Endothelial cell of umbilical vein (primary cell): ENCODE measurements at regions of chr7 and their contacts with region 1.

Region 1: DNA sequence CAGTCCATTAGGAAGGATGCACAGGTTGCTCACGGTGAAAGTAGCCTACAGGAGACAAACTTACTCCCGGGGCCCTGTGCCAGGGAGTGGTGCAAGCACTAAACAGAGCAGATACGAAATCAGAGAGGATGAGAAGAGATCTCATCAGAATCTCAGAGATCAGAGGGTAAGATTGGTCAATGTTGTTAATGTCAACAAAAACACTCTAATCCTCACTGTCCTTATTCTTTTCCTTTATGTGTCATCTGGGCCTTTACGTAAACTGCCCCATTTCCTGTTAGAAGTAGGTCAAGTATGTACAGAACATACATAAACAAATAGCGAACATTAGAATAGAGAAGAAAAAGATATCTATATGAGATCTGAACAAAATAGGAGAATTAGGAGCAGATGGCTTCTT is 163.1 kb downstream of the PPP1R17 start:
- DNase-seq: no peak
- H3K4me3 ChIP-seq: no peak overlapping the region
- H3K27ac ChIP-seq: no peak overlapping the region
- H3K4me1 ChIP-seq: peaks cover 8% of the 10 kb centered on the region
- H3K27me3 ChIP-seq: no peaks in the 10 kb centered on the region
- CTCF ChIP-seq: no peak
- POLR2A ChIP-seq: no peak

Region 2: DNA sequence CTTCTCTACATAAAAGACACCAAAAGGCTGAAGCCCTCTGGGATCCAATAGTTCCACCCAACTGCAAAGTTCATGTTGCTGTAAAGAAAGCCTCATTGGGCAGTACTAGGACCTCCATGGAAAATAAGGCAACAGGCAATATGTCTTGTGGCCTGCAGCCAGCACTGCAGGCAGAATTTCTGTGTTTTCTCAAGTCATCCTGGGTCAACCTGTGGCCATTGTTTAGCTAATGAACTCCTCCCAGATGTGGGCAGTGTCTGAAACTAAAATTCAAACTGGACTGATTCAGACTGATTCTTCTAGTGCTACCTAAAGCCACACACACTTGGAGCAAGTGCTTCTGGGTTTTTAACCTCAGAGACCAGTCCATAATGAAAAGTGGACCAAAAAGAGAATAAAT is 21.5 kb before region 1 on chr7:
- CTCF ChIA-PET with region 1: interaction called, 3 read pairs
- POLR2A ChIA-PET with region 1: no interaction called
- dilution Hi-C with region 1: no loop called
- intact Hi-C with region 1: loop called (anchors 1 kb)
- DNase-seq: peak; percentile 50
- H3K4me3 ChIP-seq: no peak overlapping the region
- H3K27ac ChIP-seq: no peak overlapping the region
- H3K4me1 ChIP-seq: peaks cover 20% of the 10 kb centered on the region
- H3K27me3 ChIP-seq: no peaks in the 10 kb centered on the region
- CTCF ChIP-seq: no peak
- POLR2A ChIP-seq: no peak